A549 (cell line): ENCODE measurements at regions of chr11 and their contacts with region 1.

Region 1: DNA sequence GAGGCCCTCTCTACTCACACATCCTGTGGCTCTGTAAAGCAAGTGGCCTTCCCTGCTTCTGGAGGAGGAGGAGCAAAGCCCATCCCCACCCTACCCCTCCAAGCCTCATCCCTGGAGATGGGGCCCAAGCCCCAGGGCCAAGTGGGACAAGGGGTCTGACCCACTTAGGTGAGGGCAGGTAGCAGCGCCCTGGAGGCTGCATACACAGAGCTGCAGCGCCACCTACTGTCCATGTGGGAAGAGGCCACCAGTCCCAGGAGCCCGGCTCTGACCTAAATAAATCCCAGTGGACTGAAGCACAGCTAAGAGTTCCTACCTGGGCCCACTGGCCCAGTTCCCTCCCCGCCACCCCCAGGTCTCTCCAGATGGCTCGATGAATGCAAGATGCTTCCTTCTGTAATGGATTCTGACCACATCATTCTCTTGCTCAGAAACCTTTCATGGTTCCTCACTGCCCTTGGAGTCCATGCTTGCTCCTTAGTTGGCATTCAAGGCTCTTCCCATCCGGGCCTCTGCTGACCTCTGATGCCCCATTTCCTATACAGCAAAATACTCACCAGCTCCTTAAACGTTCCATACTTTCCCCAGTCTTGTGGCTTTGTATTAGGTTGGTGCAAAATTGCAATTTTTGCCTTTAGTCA is 62.1 kb downstream of the THAP12 start:
- DNase-seq: peak; percentile 83 to 85
- ATAC-seq: peak; percentile 90 to 98
- H3K4me3 ChIP-seq: no peak overlapping the region
- H3K27ac ChIP-seq: no peak overlapping the region
- H3K4me1 ChIP-seq: no peaks in the 10 kb centered on the region
- CTCF ChIP-seq: peak; percentile 97
- EP300 ChIP-seq: no peak
- POLR2A ChIP-seq: no peak
- RAD21 ChIP-seq: peak; percentile 98

Region 2: DNA sequence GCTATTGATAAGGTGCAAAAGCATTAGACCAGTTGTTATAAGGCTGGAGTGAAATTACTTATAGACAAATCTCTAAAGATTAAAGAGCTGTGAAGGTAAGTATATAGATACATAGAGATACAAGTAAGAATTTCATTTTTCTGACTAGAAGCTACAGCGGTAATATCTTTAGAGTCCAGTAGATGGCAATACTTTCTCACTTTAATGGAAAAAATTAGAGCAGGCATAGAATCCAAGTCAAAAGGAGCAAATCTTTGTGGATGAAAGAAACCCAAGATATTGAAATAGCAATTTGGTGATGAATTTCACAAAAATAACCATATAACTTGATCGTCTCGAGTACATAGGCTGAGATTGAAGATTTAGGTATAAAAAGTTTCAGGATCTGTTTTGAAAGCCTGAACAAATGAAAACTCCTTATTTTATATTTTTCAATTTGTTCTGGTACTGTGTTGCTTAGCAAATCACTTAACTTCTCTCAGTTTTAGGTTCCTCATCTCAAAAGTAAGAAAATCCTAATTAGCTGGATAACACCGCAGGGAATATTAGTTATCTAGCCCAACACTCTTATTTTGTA is 421.9 kb before region 1 on chr11:
- CTCF ChIA-PET with region 1: interaction called, 38 read pairs
- POLR2A ChIA-PET with region 1: no interaction called
- DNase-seq: peak; percentile 25 to 41
- ATAC-seq: peak; percentile 50; a peak in 4 of 6 replicates
- H3K4me3 ChIP-seq: no peak overlapping the region
- H3K27ac ChIP-seq: no peak overlapping the region
- H3K4me1 ChIP-seq: no peaks in the 10 kb centered on the region
- CTCF ChIP-seq: peak; percentile 81
- EP300 ChIP-seq: no peak
- POLR2A ChIP-seq: no peak
- RAD21 ChIP-seq: peak; percentile 87 to 91

Region 3: GRCh38 chr11:76235233-76236091 is 83.4 kb before region 1 on chr11:
- CTCF ChIA-PET with region 1: interaction called, 13 read pairs
- POLR2A ChIA-PET with region 1: no interaction called
- DNase-seq: peak; percentile 92 to 98
- ATAC-seq: peak; percentile 75 to 87
- H3K4me3 ChIP-seq: peak overlapping the region; percentile 61
- H3K27ac ChIP-seq: peak overlapping the region; percentile 71 to 92
- H3K4me1 ChIP-seq: peaks cover 10% of the 10 kb centered on the region
- CTCF ChIP-seq: no peak
- EP300 ChIP-seq: no peak
- POLR2A ChIP-seq: peak; percentile 58
- RAD21 ChIP-seq: no peak

Region 4: GRCh38 chr11:76248210-76248609 is 70.7 kb before region 1 on chr11:
- CTCF ChIA-PET with region 1: interaction called, 21 read pairs
- POLR2A ChIA-PET with region 1: no interaction called
- DNase-seq: peak; percentile 52 to 56
- ATAC-seq: peak; percentile 32 to 72; a peak in 3 of 6 replicates
- H3K4me3 ChIP-seq: no peak overlapping the region
- H3K27ac ChIP-seq: no peak overlapping the region
- H3K4me1 ChIP-seq: no peaks in the 10 kb centered on the region
- CTCF ChIP-seq: peak; percentile 27; the same call in 2 of the 3 replicates
- EP300 ChIP-seq: no peak
- POLR2A ChIP-seq: no peak
- RAD21 ChIP-seq: no peak

Region 5: DNA sequence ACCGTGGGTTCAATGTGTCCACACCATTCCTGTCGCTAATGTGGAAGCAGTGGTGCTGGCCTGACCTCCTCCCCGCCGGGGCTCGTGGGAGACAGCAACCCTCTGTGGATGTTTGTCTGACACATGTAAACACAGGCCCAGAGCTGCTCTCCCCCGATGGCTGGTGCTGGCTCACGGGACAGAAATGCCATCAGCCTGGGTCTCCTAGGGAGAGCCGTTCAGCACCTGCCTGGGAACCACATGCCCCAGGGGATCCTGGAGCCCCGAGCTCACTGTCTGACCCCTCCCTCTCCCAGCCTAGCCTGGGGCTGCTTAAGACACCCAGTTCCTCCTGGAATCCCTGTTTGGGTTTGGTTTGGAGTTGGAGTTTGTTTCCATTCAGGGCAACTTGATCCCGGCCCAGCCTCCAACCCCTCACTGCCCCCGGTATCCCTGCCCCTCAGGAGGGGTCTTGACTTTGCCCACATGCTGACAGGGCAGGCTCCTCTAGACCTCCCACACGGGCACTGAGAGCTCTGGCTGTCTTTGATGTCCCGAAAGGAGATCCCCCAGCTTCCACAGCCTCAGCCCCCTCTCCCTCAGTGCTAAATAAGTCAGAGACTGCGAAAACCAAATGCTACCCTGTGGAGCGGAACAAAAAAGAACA is 61.7 kb before region 1 on chr11:
- CTCF ChIA-PET with region 1: interaction called, 21 read pairs
- POLR2A ChIA-PET with region 1: no interaction called
- DNase-seq: no peak
- ATAC-seq: peak in 1 of 2 experiments; percentile 30; a peak in 3 of 6 replicates
- H3K4me3 ChIP-seq: no peak overlapping the region
- H3K27ac ChIP-seq: no peak overlapping the region
- H3K4me1 ChIP-seq: no peaks in the 10 kb centered on the region
- CTCF ChIP-seq: no peak
- EP300 ChIP-seq: no peak
- POLR2A ChIP-seq: no peak
- RAD21 ChIP-seq: no peak

Region 6: DNA sequence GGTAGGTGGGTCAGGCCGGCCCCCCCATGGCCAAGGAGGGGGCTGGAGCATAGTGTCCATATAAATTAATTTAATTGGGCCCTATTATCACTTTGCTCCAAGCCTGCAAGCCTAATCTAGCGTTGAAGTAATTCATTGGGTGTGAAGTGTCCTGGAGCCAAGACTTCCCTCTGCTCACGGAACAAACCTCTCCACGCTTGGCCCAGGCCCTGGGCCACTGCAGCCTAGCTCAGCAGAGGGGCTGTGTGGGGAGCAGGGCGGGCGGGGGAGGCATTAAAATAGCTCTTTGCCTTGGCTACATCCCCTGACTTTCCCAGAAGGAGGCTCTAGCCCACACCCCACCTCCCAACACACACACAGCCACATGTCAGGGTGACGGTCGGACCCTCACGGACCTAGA is 11.5 kb before region 1 on chr11:
- CTCF ChIA-PET with region 1: interaction called, 88 read pairs
- POLR2A ChIA-PET with region 1: no interaction called
- DNase-seq: no peak
- ATAC-seq: no peak
- H3K4me3 ChIP-seq: no peak overlapping the region
- H3K27ac ChIP-seq: no peak overlapping the region
- H3K4me1 ChIP-seq: no peaks in the 10 kb centered on the region
- CTCF ChIP-seq: no peak
- EP300 ChIP-seq: no peak
- POLR2A ChIP-seq: no peak
- RAD21 ChIP-seq: no peak

Region 7: GRCh38 chr11:76329084-76329984 is 10.5 kb after region 1 on chr11:
- CTCF ChIA-PET with region 1: interaction called, 23 read pairs
- POLR2A ChIA-PET with region 1: no interaction called
- DNase-seq: no peak
- ATAC-seq: no peak; a peak in 2 of 6 replicates
- H3K4me3 ChIP-seq: no peak overlapping the region
- H3K27ac ChIP-seq: no peak overlapping the region
- H3K4me1 ChIP-seq: no peaks in the 10 kb centered on the region
- CTCF ChIP-seq: no peak
- EP300 ChIP-seq: no peak
- POLR2A ChIP-seq: no peak
- RAD21 ChIP-seq: no peak